ENCODE measurements at regions of chr11 and their contacts with region 1.

Region 1: DNA sequence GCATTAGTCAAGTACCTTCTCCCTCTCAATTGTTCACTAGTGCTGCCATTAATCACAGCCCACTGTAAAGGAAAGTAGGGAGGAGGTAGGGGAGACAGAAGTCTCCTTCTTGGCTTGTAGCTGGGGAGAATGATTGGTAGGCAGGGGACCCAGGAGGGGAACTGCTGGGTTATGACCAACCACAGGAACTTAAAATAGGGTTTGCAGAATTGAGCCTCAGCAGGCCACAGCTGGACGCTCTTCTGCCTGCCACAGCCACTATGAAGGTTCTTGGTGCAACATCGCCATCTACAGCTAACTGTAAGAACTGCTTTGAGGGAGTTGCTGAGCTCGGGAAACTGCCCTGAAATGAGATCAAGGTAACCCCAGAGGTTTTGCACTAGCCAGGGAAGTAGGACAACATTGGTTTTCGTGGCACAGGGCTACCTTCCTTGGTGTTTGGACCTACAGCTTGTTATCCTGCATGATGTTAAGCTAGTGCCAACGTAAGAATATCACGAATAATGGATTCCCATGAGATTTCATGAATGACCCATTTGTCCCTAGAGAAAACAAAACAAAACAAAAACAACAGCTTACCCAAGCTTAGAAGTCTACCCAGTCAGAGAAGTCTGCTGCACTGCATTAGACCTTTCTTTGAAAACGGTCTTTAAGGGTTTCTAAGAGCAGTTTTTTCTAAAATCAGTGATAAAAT is 787.1 kb upstream of the API5 start:
- DNase-seq: no peak
- H3K4me3 Mint-ChIP-seq: no peak overlapping the region
- H3K27ac Mint-ChIP-seq: no peak overlapping the region
- H3K4me1 Mint-ChIP-seq: no peaks in the 10 kb centered on the region
- H3K27me3 Mint-ChIP-seq: no peaks in the 10 kb centered on the region

Region 2: GRCh38 chr11:41461057-41461681 is 1063.5 kb before region 1 on chr11:
- intact Hi-C with region 1: loop called (anchors 1 kb)
- DNase-seq: no peak
- H3K4me3 Mint-ChIP-seq: no peak overlapping the region
- H3K27ac Mint-ChIP-seq: no peak overlapping the region
- H3K4me1 Mint-ChIP-seq: no peaks in the 10 kb centered on the region
- H3K27me3 Mint-ChIP-seq: peaks cover 4% of the 10 kb centered on the region

Region 3: DNA sequence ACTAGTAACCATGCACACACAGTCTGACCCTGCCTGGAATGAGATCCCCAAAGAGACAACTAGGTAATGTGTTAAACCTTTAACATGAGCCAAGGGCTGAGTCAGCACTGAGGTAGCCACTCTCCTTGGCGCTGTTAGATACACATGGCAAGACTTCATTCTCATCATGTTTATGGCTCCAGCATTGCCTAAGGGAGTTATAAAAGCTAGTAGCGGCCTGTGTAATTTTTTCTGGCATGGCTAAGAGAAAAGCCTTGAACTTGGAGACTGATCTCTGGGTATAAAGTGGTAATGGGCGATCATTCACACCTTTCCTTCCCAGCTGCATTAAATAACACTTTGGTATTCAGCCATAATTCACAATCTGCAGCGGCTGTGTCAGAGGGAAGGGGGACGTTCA is 285.5 kb before region 1 on chr11:
- intact Hi-C with region 1: no loop called
- DNase-seq: no peak
- H3K4me3 Mint-ChIP-seq: no peak overlapping the region
- H3K27ac Mint-ChIP-seq: no peak overlapping the region
- H3K4me1 Mint-ChIP-seq: no peaks in the 10 kb centered on the region
- H3K27me3 Mint-ChIP-seq: no peaks in the 10 kb centered on the region